Activated CD4-positive, alpha-beta memory T cell treated with anti-CD3 and anti-CD28 coated beads for 36 hours (primary cell): ENCODE measurements at regions of chr6 and their contacts with region 1.

Region 1: DNA sequence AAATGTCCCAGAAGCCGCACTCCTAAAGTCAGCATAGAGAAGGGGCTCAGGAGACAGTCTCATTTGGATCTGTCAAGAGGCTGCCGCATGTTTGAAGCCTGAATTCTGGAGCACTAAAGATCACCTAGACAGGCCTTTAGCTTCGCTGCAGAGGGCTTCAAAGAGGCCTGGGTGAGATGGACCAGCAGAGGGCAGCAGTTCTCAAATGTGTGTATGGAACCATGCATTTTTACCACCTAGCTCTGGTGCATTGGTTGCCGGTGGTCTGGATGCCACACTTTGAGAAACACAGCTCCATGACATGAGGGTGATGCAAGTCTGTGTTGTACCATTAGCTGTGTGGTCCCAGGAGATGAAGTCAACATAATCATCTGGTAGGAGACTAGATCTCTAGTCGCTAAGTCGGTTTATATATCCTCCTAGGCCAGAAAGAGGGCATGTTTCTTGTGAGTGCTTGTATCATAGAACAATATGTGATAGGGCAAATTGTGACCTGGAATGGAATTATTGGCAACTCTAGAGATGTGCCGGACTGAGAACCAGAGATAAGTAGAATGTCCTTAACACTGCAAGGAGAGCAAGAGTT is 64.8 kb downstream of the KIAA0319 start:
- DNase-seq: peak; percentile 85
- H3K4me3 Mint-ChIP-seq: no peak overlapping the region
- H3K27ac Mint-ChIP-seq: no peak overlapping the region
- H3K4me1 Mint-ChIP-seq: peaks cover 2% of the 10 kb centered on the region
- H3K27me3 Mint-ChIP-seq: no peaks in the 10 kb centered on the region

Region 2: GRCh38 chr6:24188578-24189080 is 392.5 kb before region 1 on chr6:
- CTCF ChIA-PET with region 1: no interaction called
- POLR2A ChIA-PET with region 1: no interaction called
- intact Hi-C with region 1: no loop called
- DNase-seq: no peak
- H3K4me3 Mint-ChIP-seq: no peak overlapping the region
- H3K27ac Mint-ChIP-seq: no peak overlapping the region
- H3K4me1 Mint-ChIP-seq: no peaks in the 10 kb centered on the region
- H3K27me3 Mint-ChIP-seq: peaks cover 6% of the 10 kb centered on the region

Region 3: GRCh38 chr6:24568683-24569082 is 12.5 kb before region 1 on chr6:
- CTCF ChIA-PET with region 1: interaction called, 19 read pairs
- POLR2A ChIA-PET with region 1: no interaction called
- intact Hi-C with region 1: no loop called
- DNase-seq: no peak
- H3K4me3 Mint-ChIP-seq: no peak overlapping the region
- H3K27ac Mint-ChIP-seq: no peak overlapping the region
- H3K4me1 Mint-ChIP-seq: no peaks in the 10 kb centered on the region
- H3K27me3 Mint-ChIP-seq: no peaks in the 10 kb centered on the region

Region 4: DNA sequence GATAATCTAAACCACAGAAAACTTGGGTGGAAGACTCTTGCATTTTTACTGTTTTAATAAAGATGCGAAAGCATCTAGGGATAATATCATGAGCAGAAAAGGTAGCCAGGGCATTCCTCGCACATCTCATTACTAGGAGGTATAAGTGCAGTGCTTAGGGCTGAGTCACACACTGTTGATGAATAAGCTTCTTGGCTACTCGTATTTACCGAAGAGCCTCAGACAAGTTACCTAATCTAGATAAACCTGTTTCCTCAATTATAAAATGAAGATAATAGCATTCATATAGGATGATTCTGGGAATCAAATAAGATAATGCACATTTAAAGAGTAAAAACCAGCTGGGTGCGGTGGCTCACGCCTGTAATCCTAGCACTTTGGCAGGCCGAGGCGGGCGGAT is 65.6 kb after region 1 on chr6:
- CTCF ChIA-PET with region 1: interaction called, 12 read pairs
- POLR2A ChIA-PET with region 1: no interaction called
- intact Hi-C with region 1: no loop called
- DNase-seq: no peak
- H3K4me3 Mint-ChIP-seq: peak overlapping the region; percentile 79
- H3K27ac Mint-ChIP-seq: peak overlapping the region; percentile 38
- H3K4me1 Mint-ChIP-seq: peaks cover 16% of the 10 kb centered on the region
- H3K27me3 Mint-ChIP-seq: peaks cover 17% of the 10 kb centered on the region

Region 5: GRCh38 chr6:24689964-24690363 is 108.8 kb after region 1 on chr6:
- CTCF ChIA-PET with region 1: interaction called, 82 read pairs
- POLR2A ChIA-PET with region 1: no interaction called
- intact Hi-C with region 1: loop called (anchors 1 kb)
- DNase-seq: no peak
- H3K4me3 Mint-ChIP-seq: no peak overlapping the region
- H3K27ac Mint-ChIP-seq: no peak overlapping the region
- H3K4me1 Mint-ChIP-seq: peaks cover 18% of the 10 kb centered on the region
- H3K27me3 Mint-ChIP-seq: no peaks in the 10 kb centered on the region

Region 6: GRCh38 chr6:24774696-24775519 is 193.7 kb after region 1 on chr6 and contains the start of gene GMNN:
- CTCF ChIA-PET with region 1: interaction called, 19 read pairs
- POLR2A ChIA-PET with region 1: no interaction called
- intact Hi-C with region 1: loop called (anchors 2 kb)
- DNase-seq: peak; percentile 98
- H3K4me3 Mint-ChIP-seq: peak within 1 kb of the TSS; percentile 99
- H3K27ac Mint-ChIP-seq: peak within 1 kb of the TSS; percentile 100
- H3K4me1 Mint-ChIP-seq: peaks cover 27% of the 10 kb centered on the region
- H3K27me3 Mint-ChIP-seq: no peaks in the 10 kb centered on the region
- total RNA-seq, gene GMNN: 76.5 to 77.4 TPM